MCF 10A (cell line): ENCODE measurements at regions of chr7 and their contacts with region 1.

Region 1: GRCh38 chr7:12211054-12211710 is at the start of gene TMEM106B:
- DNase-seq: peak; percentile 97
- H3K4me3 Mint-ChIP-seq: peak within 1 kb of the TSS; percentile 90
- H3K27ac Mint-ChIP-seq: peak within 1 kb of the TSS; percentile 84
- H3K4me1 Mint-ChIP-seq: peaks cover 15% of the 10 kb centered on the region
- H3K27me3 Mint-ChIP-seq: peaks cover 28% of the 10 kb centered on the region
- CTCF ChIP-seq: no peak
- total RNA-seq, gene TMEM106B: 33.7 and 41.7 TPM in 2 replicates

Region 2: DNA sequence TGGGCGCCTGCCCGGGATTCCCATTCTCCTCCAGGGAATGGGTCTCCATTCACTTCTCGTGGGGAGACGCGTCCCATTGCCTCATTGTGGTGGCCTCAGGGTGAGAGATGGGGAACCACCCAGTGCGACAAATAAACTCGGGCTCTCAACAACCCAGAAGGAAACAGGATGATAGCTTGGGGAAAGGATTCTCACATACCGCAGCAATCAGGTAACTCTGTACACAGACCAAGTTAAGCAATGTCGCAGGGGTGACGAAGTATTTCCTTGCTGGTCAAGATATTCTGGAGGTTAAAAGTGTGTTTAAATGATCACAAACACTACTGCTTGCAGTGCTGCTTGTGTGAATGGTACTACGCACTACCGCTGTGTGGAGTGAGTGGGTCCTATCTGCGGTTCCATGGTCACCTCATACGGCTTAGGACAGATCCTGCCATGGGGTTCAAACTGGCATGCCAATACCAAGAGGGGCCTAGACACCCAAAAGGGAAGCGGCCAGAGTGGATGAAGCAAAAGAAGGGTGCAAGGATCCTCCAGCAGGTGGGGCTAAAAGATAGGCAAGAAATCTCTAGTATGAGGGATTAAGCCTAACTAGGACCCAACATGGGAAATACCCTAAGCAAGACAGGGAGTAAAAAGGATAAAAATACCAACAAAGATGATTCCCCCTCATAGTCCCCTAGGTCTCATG is 143.9 kb before region 1 on chr7:
- CTCF ChIA-PET with region 1: interaction called, 5 read pairs
- POLR2A ChIA-PET with region 1: interaction called, 5 read pairs
- intact Hi-C with region 1: loop called (anchors 1 kb)
- DNase-seq: peak; percentile 75
- H3K4me3 Mint-ChIP-seq: no peak overlapping the region
- H3K27ac Mint-ChIP-seq: no peak overlapping the region
- H3K4me1 Mint-ChIP-seq: peaks cover 12% of the 10 kb centered on the region
- H3K27me3 Mint-ChIP-seq: no peaks in the 10 kb centered on the region
- CTCF ChIP-seq: peak; percentile 59

Region 3: GRCh38 chr7:12199363-12199762 is 11.8 kb before region 1 on chr7:
- CTCF ChIA-PET with region 1: interaction called, 3 read pairs
- POLR2A ChIA-PET with region 1: interaction called, 25 read pairs
- intact Hi-C with region 1: no loop called
- DNase-seq: peak; percentile 23
- H3K4me3 Mint-ChIP-seq: no peak overlapping the region
- H3K27ac Mint-ChIP-seq: no peak overlapping the region
- H3K4me1 Mint-ChIP-seq: no peaks in the 10 kb centered on the region
- H3K27me3 Mint-ChIP-seq: no peaks in the 10 kb centered on the region
- CTCF ChIP-seq: no peak

Region 4: DNA sequence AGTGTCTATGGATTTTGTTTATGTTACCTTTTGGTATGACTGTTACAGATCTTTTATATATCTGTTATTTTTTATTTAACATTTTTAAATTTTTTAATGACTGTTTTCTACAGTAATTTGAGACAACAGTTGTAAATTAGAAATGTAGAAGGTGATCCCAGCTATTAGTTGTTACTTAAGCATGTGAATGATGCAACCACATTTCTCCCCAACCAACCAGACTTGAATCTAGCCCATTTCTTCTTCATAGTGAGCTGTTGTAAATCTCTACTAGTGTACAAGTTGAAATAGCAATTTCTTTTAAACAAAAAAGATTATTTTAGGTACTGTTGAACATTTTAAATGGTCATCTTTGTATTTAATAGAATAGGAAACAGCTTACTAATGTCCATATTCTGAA is 17.9 kb after region 1 on chr7:
- CTCF ChIA-PET with region 1: interaction called, 4 read pairs
- POLR2A ChIA-PET with region 1: interaction called, 12 read pairs
- intact Hi-C with region 1: no loop called
- DNase-seq: no peak
- H3K4me3 Mint-ChIP-seq: no peak overlapping the region
- H3K27ac Mint-ChIP-seq: no peak overlapping the region
- H3K4me1 Mint-ChIP-seq: no peaks in the 10 kb centered on the region
- H3K27me3 Mint-ChIP-seq: no peaks in the 10 kb centered on the region
- CTCF ChIP-seq: no peak

Region 5: DNA sequence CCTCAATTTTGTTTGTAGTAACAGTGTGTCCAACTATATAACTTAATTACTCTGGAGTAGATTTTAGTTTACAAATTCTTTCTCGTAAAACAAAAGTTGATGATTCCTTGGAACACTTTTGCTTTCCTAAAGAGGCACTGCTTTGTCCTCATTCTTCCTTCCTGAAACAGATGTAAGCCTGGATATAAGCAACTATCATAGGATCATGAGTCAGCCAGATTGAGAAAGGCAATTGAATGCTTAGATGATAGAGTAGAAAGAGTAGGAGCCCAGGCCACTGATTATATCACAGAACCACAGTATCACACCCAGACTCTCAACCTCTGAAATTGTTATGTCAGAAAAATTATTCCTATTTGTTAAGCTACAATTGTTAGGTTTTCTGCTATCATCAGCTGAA is 69.9 kb after region 1 on chr7:
- CTCF ChIA-PET with region 1: no interaction called
- POLR2A ChIA-PET with region 1: no interaction called
- intact Hi-C with region 1: no loop called
- DNase-seq: peak; percentile 22
- H3K4me3 Mint-ChIP-seq: no peak overlapping the region
- H3K27ac Mint-ChIP-seq: no peak overlapping the region
- H3K4me1 Mint-ChIP-seq: no peaks in the 10 kb centered on the region
- H3K27me3 Mint-ChIP-seq: no peaks in the 10 kb centered on the region
- CTCF ChIP-seq: no peak

Region 6: DNA sequence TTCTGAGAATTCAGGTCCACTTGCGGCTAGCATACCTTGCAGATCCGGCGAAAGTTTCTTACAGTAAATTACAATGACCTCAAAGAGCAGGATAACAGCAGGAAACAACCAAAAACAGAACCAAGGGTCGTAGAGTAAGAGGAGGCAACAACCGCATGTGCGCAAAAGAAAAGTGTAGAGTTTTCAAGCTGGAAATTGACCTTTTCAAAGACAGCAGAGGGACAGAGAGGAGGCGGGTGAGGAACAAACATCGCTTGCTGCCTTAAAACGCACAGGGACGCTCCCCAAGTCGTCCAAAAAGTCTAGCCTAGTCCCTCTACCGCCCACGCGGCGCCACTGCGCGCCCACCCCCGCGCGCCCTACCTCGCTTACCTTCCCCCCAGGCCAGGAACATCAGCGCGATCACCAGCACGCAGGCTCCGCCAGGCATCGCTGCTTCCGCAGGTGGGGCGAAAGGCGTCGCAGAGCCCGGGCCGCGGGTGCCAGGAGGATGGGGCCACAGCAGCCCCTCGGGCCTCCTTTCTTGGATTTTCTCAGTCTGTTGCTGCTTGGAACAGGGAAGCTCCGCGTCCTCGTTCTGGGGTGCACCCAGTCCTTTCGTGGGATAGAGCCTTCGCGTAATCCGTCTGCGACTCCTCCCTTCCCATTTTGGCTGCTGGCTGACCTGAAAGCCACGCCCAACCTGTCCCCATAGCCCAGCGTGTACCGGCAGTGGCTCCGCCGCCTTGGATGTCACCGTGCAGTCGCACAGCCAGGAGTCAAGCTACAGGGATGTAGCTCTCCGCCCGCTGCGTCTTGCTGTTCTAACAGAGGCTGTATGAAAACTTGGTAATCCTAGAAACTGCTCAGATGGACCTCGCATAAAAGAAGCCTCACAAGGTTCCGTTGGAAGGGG is 192.4 kb after region 1 on chr7 and contains the start of gene VWDE:
- CTCF ChIA-PET with region 1: no interaction called
- POLR2A ChIA-PET with region 1: interaction called, 16 read pairs
- intact Hi-C with region 1: no loop called
- DNase-seq: peak; percentile 49
- H3K4me3 Mint-ChIP-seq: peak within 1 kb of the TSS; percentile 75
- H3K27ac Mint-ChIP-seq: peak within 1 kb of the TSS; percentile 20
- H3K4me1 Mint-ChIP-seq: no peaks in the 10 kb centered on the region
- H3K27me3 Mint-ChIP-seq: peaks cover 16% of the 10 kb centered on the region
- CTCF ChIP-seq: no peak
- total RNA-seq, gene VWDE: 3.0 and 3.1 TPM in 2 replicates

Region 7: DNA sequence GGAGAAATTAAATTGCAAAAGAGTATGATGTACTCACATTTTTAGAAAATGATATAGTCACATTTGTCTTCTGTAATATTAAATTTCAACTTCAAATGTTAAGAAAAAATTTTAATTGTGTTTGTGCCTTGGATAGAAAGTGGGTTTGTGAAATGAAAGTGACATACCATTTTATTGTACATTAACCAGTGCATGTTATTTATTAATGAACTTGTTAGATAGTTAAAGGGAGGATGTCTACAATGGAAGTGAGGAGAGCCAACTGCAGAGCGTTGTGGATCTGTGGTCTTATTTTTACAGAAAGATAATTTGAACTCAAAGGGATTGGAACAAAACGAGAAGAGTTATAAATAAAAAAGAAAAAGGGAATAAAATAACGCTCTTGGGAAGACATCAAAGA is 768.0 kb after region 1 on chr7:
- CTCF ChIA-PET with region 1: no interaction called
- POLR2A ChIA-PET with region 1: no interaction called
- intact Hi-C with region 1: no loop called
- DNase-seq: no peak
- H3K4me3 Mint-ChIP-seq: no peak overlapping the region
- H3K27ac Mint-ChIP-seq: no peak overlapping the region
- H3K4me1 Mint-ChIP-seq: no peaks in the 10 kb centered on the region
- H3K27me3 Mint-ChIP-seq: no peaks in the 10 kb centered on the region
- CTCF ChIP-seq: no peak